ENCODE measurements at regions of chr4 and their contacts with region 1.

Region 1: GRCh38 chr4:104451573-104451972 is 43.1 kb downstream of the CXXC4 start:
- DNase-seq: peak; percentile 34
- H3K4me3 Mint-ChIP-seq: no peak overlapping the region
- H3K27ac Mint-ChIP-seq: no peak overlapping the region
- H3K4me1 Mint-ChIP-seq: no peaks in the 10 kb centered on the region
- H3K27me3 Mint-ChIP-seq: no peaks in the 10 kb centered on the region
- CTCF ChIP-seq: peak; percentile 29

Region 2: GRCh38 chr4:103198111-103198765 is 1253.3 kb before region 1 on chr4 and contains the start of gene CENPE:
- CTCF ChIA-PET with region 1: no interaction called
- POLR2A ChIA-PET with region 1: no interaction called
- intact Hi-C with region 1: no loop called
- DNase-seq: peak; percentile 91
- H3K4me3 Mint-ChIP-seq: peak within 1 kb of the TSS; percentile 84
- H3K27ac Mint-ChIP-seq: peak within 1 kb of the TSS; percentile 99
- H3K4me1 Mint-ChIP-seq: peaks cover 20% of the 10 kb centered on the region
- H3K27me3 Mint-ChIP-seq: no peaks in the 10 kb centered on the region
- CTCF ChIP-seq: no peak
- total RNA-seq, gene CENPE: 25.2 and 32.4 TPM in 2 replicates

Region 3: GRCh38 chr4:104015680-104016253 is 435.8 kb before region 1 on chr4:
- CTCF ChIA-PET with region 1: interaction called, 7 read pairs
- POLR2A ChIA-PET with region 1: no interaction called
- intact Hi-C with region 1: loop called (anchors 1 kb)
- DNase-seq: peak; percentile 38
- H3K4me3 Mint-ChIP-seq: no peak overlapping the region
- H3K27ac Mint-ChIP-seq: no peak overlapping the region
- H3K4me1 Mint-ChIP-seq: no peaks in the 10 kb centered on the region
- H3K27me3 Mint-ChIP-seq: no peaks in the 10 kb centered on the region
- CTCF ChIP-seq: peak; percentile 33

Region 4: DNA sequence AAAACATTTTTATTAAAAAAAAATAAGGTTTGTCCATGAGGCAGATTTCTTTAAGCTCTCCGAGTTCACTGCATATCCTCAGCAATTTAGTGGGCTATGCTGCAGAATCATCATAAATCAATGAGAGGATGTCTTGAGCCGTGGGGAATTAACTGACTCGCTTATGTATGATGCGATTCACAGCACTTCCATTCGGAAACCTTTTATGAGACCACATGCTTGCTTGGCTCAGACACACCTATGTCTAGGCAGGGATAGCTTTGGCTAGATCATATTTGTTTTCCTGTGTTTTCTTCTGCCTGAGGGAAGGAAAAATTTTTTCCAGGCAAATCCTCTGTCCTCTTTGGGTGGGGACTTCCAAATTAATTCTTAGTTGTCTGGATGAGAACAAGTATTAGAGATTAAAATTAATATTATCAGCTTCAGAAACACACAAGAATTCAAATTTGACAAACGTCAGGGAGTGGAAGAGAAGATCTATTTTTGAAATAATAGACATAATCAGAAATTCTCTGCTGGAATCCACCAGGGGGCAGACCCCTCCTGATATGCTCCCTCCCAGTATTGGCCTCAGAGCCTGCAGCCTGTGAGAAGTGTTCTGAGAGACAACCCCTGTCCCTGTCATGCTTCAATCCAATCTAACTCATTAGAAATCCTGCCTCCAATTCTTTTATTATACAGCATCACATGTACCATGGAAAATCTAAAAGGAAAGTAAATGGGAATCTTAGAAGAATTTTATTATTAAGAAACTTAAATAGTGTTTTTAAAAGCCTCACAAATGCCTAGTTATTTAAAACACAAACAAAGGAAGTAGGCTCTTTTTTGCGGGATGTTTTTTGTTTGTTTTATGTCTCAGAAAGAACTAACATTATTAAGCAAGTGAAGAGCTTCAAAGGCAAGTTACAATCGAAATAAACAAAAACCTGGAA is 386.7 kb before region 1 on chr4:
- CTCF ChIA-PET with region 1: interaction called, 3 read pairs
- POLR2A ChIA-PET with region 1: no interaction called
- intact Hi-C with region 1: loop called (anchors 1 kb)
- DNase-seq: peak; percentile 72
- H3K4me3 Mint-ChIP-seq: no peak overlapping the region
- H3K27ac Mint-ChIP-seq: peak overlapping the region; percentile 2
- H3K4me1 Mint-ChIP-seq: no peaks in the 10 kb centered on the region
- H3K27me3 Mint-ChIP-seq: no peaks in the 10 kb centered on the region
- CTCF ChIP-seq: peak; percentile 63

Region 5: GRCh38 chr4:104436542-104436941 is 15.0 kb before region 1 on chr4:
- CTCF ChIA-PET with region 1: no interaction called
- POLR2A ChIA-PET with region 1: no interaction called
- intact Hi-C with region 1: no loop called
- DNase-seq: no peak
- H3K4me3 Mint-ChIP-seq: no peak overlapping the region
- H3K27ac Mint-ChIP-seq: no peak overlapping the region
- H3K4me1 Mint-ChIP-seq: no peaks in the 10 kb centered on the region
- H3K27me3 Mint-ChIP-seq: no peaks in the 10 kb centered on the region
- CTCF ChIP-seq: no peak

Region 6: GRCh38 chr4:104465201-104465600 is 13.6 kb after region 1 on chr4:
- CTCF ChIA-PET with region 1: no interaction called
- POLR2A ChIA-PET with region 1: no interaction called
- intact Hi-C with region 1: no loop called
- DNase-seq: no peak
- H3K4me3 Mint-ChIP-seq: no peak overlapping the region
- H3K27ac Mint-ChIP-seq: peak overlapping the region; percentile 69
- H3K4me1 Mint-ChIP-seq: peaks cover 8% of the 10 kb centered on the region
- H3K27me3 Mint-ChIP-seq: no peaks in the 10 kb centered on the region
- CTCF ChIP-seq: no peak

Region 7: GRCh38 chr4:105036991-105037390 is 585.4 kb after region 1 on chr4:
- CTCF ChIA-PET with region 1: no interaction called
- POLR2A ChIA-PET with region 1: no interaction called
- intact Hi-C with region 1: no loop called
- DNase-seq: no peak
- H3K4me3 Mint-ChIP-seq: no peak overlapping the region
- H3K27ac Mint-ChIP-seq: no peak overlapping the region
- H3K4me1 Mint-ChIP-seq: no peaks in the 10 kb centered on the region
- H3K27me3 Mint-ChIP-seq: no peaks in the 10 kb centered on the region
- CTCF ChIP-seq: no peak

Measured in MCF 10A (cell line).